ENCODE measurements at regions of chr6 and their contacts with region 1.

Region 1: DNA sequence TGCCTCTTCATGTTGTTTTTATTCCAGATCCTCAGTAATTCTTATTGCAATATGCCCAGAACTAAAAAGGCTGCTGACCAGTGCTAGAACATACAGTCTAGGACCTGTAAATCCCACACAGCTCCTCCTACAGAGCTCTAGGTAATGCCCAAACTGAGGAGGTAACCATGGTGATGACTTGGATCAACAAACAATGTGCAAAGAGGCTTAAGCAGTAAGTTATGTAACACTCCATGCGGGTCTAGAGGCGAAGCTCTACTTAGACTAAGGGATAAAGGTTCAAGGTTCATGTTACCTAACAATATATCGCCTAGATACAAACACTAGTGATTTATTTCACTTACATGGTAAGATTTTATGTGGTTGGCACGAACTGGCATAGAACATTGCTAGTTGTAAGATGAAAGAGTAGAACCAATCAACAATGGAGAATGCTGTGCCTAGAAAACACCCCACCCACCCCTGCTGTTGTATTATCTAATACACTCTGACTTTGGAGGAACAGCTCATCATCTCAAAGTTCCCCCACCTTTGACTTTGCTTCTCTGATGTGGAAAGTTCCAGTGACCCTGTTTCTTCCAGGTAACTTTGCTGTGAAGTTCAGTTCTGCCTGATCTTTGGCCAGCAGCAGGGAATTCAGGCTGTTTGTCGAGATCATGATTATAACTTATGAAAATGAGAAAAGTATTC is 242.4 kb downstream of the ALDH8A1 start:
- DNase-seq: peak; percentile 85 to 88
- H3K4me3 ChIP-seq: no peak overlapping the region
- H3K4me3 Mint-ChIP-seq: peak overlapping the region; percentile 28
- H3K27ac Mint-ChIP-seq: peak overlapping the region; percentile 80
- H3K4me1 ChIP-seq: peaks cover 30% of the 10 kb centered on the region
- H3K4me1 Mint-ChIP-seq: peaks cover 18% of the 10 kb centered on the region
- H3K27me3 ChIP-seq: no peaks in the 10 kb centered on the region
- H3K27me3 Mint-ChIP-seq: no peaks in the 10 kb centered on the region
- CTCF ChIP-seq: no peak

Region 2: DNA sequence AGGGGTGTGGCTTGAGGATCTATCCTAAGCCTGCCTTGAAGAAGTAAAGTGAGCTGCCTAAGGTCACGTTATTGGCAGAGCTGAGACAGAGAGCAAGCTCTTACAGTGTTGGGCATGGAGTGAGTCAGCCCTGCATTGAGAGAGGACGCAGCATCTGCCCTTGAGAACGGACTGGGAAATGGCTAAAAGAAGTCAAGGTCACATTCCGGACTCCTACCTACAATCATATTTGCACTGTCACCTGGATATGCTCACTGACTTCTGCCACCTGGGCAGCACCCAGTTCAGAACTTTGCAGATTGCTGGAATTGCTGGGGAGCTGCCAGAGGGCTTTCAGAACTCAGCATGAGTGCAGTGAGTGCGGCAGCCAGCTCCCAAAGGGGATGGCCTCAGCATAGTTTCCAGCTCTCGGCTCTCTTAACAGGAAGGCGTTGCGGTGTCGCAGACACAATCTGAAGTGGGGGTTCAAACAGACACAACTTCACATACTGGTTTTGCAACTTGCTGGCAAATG is 190.3 kb before region 1 on chr6:
- CTCF ChIA-PET with region 1: no interaction called
- POLR2A ChIA-PET with region 1: no interaction called
- intact Hi-C with region 1: no loop called
- DNase-seq: no peak
- H3K4me3 ChIP-seq: no peak overlapping the region
- H3K4me3 Mint-ChIP-seq: no peak overlapping the region
- H3K27ac Mint-ChIP-seq: no peak overlapping the region
- H3K4me1 ChIP-seq: no peaks in the 10 kb centered on the region
- H3K4me1 Mint-ChIP-seq: no peaks in the 10 kb centered on the region
- H3K27me3 ChIP-seq: no peaks in the 10 kb centered on the region
- H3K27me3 Mint-ChIP-seq: no peaks in the 10 kb centered on the region
- CTCF ChIP-seq: no peak

Region 3: DNA sequence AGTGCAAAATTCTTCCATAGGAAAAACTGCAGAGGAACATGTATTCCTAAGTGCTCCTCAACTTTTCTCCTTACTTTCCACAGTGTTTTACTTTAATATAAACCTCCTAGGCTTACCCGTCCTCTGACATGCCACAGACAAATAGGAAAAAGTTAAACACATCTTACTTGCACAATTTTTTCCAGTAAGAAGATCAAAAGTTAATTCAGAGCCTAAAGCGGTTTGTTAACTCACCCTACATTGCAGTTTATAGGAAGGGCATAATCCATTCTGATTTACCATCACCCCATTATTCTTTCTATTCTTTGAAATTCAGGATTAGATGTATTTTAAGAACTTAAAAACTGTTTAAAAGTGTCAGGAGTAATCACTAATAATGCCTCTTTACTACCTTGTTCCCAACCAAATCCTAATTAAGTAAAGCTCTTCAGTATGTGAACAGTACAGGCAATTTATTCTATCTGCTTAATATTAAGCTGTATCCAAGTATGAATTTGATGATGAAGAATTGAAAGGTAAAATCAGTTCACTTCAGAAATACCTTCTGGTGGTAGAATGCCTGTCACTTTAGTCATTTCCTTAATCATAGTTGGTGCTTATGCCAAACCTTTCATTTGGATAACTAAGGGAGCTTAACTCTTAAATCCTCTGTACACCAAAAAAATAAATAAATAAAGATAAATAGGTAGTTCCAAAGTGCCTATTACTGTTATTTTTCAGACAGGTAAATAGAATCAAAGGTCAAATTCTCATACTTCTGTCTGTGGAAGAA is 49.5 kb before region 1 on chr6:
- CTCF ChIA-PET with region 1: interaction called, 3 read pairs
- POLR2A ChIA-PET with region 1: no interaction called
- intact Hi-C with region 1: loop called (anchors 2 kb)
- DNase-seq: no peak
- H3K4me3 ChIP-seq: no peak overlapping the region
- H3K4me3 Mint-ChIP-seq: no peak overlapping the region
- H3K27ac Mint-ChIP-seq: no peak overlapping the region
- H3K4me1 ChIP-seq: peaks cover 29% of the 10 kb centered on the region
- H3K4me1 Mint-ChIP-seq: peaks cover 13% of the 10 kb centered on the region
- H3K27me3 ChIP-seq: no peaks in the 10 kb centered on the region
- H3K27me3 Mint-ChIP-seq: no peaks in the 10 kb centered on the region
- CTCF ChIP-seq: no peak

Region 4: GRCh38 chr6:134678436-134678889 is 29.0 kb before region 1 on chr6:
- CTCF ChIA-PET with region 1: no interaction called
- POLR2A ChIA-PET with region 1: no interaction called
- intact Hi-C with region 1: loop called (anchors 1 kb)
- DNase-seq: peak; percentile 27 to 48
- H3K4me3 ChIP-seq: no peak overlapping the region
- H3K4me3 Mint-ChIP-seq: peak overlapping the region; percentile 54
- H3K27ac Mint-ChIP-seq: peak overlapping the region; percentile 90
- H3K4me1 ChIP-seq: peaks cover 48% of the 10 kb centered on the region
- H3K4me1 Mint-ChIP-seq: peaks cover 40% of the 10 kb centered on the region
- H3K27me3 ChIP-seq: no peaks in the 10 kb centered on the region
- H3K27me3 Mint-ChIP-seq: no peaks in the 10 kb centered on the region
- CTCF ChIP-seq: no peak

Region 5: GRCh38 chr6:134720353-134721059 is 13.0 kb after region 1 on chr6:
- CTCF ChIA-PET with region 1: no interaction called
- POLR2A ChIA-PET with region 1: no interaction called
- intact Hi-C with region 1: no loop called
- DNase-seq: no peak
- H3K4me3 ChIP-seq: no peak overlapping the region
- H3K4me3 Mint-ChIP-seq: no peak overlapping the region
- H3K27ac Mint-ChIP-seq: no peak overlapping the region
- H3K4me1 ChIP-seq: no peaks in the 10 kb centered on the region
- H3K4me1 Mint-ChIP-seq: no peaks in the 10 kb centered on the region
- H3K27me3 ChIP-seq: no peaks in the 10 kb centered on the region
- H3K27me3 Mint-ChIP-seq: no peaks in the 10 kb centered on the region
- CTCF ChIP-seq: no peak

Region 6: DNA sequence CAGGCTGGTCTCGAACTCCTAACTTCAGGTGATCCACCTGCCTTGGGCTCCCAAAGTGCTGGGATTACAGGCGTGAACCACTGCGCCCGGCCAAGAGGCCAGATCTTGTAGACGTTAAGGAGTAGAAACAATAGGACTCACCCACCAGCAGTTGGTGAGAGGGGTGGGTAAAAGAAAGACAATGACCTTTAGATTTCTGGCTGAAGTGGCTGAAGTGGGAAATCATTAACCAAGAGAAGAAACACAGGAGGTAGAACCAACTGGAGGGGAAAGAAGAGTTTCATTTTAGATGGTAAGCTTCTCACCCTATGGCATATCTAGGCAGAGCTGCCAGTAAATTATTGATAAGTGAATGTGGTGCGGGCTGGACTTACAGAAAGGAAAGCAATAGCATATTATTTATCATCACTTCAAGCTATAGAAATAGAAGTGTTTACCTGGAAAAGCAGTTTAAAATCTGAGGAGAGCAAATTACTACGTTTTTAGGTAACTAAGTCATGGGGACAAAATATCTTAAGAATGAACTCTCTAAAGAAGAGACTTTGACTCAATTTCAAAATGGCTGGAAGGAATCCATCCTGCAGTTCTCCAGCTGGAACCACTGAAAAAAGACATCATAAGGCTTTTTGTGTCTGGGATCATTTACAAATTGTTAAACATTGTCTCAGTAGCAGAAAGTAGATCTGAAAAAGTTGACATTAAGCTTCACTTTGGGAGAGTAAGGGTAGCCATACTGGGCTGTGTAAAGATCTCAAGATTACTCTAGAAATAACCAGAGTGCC is 132.8 kb after region 1 on chr6:
- CTCF ChIA-PET with region 1: no interaction called
- POLR2A ChIA-PET with region 1: no interaction called
- intact Hi-C with region 1: no loop called
- DNase-seq: peak in 1 of 2 experiments; percentile 5
- H3K4me3 ChIP-seq: no peak overlapping the region
- H3K4me3 Mint-ChIP-seq: no peak overlapping the region
- H3K27ac Mint-ChIP-seq: no peak overlapping the region
- H3K4me1 ChIP-seq: peaks cover 16% of the 10 kb centered on the region
- H3K4me1 Mint-ChIP-seq: peaks cover 20% of the 10 kb centered on the region
- H3K27me3 ChIP-seq: no peaks in the 10 kb centered on the region
- H3K27me3 Mint-ChIP-seq: no peaks in the 10 kb centered on the region
- CTCF ChIP-seq: no peak

Measured in Caco-2 (cell line).